ENCODE measurements at regions of chr6 and their contacts with region 1.

Region 1: DNA sequence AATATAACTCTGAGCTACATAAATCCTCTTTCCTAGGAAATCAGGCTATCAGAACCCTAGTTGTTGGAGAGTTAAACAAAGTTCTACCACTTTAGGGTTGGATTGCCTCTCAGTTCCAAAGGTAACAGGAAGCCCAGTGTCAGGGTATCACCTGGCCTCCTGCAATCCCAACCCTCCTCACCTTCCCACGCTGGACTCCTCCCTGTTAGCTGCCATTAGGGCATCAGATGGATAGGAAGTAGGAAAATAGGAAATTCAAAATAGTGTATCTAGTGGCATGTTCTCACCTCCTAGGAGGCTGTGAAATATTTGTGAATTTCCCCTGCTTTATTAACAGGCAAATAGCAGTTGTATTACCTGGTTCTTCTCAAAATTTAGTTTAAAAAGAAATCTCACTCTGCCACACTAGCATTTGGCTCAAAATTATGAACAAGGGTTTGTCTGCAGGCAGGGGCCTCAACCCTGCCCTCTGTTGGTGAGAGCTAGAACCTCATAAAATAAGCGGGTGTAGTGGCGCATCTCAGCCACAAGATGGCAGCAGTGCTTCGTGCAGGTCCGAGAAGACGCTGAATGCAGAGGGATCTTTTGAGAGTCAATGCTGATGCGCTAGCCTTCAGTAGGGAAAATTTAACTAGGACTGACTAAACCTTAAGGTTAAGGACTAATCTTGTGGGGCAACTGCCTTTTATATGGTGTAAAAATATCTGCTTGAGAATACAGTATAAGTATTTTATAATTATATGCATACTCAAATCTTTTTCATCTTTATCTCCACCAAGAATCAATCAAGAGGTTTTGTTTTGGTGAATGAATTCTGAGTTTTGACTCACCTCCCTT is 209.8 kb upstream of the KCNQ5 start:
- DNase-seq: peak; percentile 42 to 82
- H3K4me3 ChIP-seq: no peak overlapping the region
- H3K27ac ChIP-seq: no peak overlapping the region
- H3K4me1 ChIP-seq: no peaks in the 10 kb centered on the region
- H3K27me3 ChIP-seq: no peaks in the 10 kb centered on the region
- CTCF ChIP-seq: peak; percentile 100

Region 2: DNA sequence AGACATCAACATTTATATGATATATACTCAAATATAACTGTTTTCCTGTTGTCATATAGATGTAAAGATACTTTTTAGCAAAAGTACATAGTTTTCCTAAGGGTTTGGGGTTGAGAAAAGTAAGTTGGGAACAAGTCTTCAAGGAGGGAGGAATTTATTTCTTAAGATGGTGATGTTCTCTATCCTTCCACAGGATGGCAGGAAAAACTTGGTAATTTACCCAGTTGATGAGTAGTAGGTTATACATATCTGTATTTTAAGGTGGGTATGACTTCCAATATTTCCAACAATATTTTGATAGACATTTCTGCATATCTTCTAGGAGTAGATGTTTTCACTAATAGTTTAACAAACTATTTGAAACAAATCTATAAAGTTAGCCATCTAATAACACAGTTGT is 271.3 kb before region 1 on chr6:
- CTCF ChIA-PET with region 1: no interaction called
- POLR2A ChIA-PET with region 1: no interaction called
- intact Hi-C with region 1: loop called (anchors 1 kb)
- DNase-seq: no peak
- H3K4me3 ChIP-seq: no peak overlapping the region
- H3K27ac ChIP-seq: no peak overlapping the region
- H3K4me1 ChIP-seq: no peaks in the 10 kb centered on the region
- H3K27me3 ChIP-seq: no peaks in the 10 kb centered on the region
- CTCF ChIP-seq: no peak

Region 3: DNA sequence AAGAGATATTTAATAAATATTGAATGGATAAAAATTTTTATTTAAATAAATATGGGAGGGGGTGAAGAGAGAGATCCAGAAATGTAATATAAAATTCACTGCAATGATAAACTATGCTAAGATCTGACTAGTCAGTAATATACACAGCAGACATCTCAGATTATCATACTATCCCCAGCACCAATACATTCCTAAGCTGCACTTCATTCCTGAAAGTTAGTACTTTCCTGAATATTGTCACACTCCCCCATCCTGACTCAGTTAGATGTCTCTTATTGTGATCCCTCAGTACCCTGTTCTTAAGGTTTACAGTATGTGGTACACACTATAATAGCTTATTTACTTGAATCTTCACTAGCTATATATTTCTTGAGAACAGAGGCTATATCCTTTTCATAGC is 121.5 kb after region 1 on chr6:
- CTCF ChIA-PET with region 1: interaction called, 10 read pairs
- POLR2A ChIA-PET with region 1: no interaction called
- intact Hi-C with region 1: no loop called
- DNase-seq: no peak
- H3K4me3 ChIP-seq: no peak overlapping the region
- H3K27ac ChIP-seq: no peak overlapping the region
- H3K4me1 ChIP-seq: no peaks in the 10 kb centered on the region
- H3K27me3 ChIP-seq: no peaks in the 10 kb centered on the region
- CTCF ChIP-seq: no peak

Region 4: GRCh38 chr6:73129653-73130443 is 717.8 kb after region 1 on chr6:
- CTCF ChIA-PET with region 1: interaction called, 7 read pairs
- POLR2A ChIA-PET with region 1: no interaction called
- intact Hi-C with region 1: loop called (anchors 1 kb)
- DNase-seq: peak; percentile 77 to 87
- H3K4me3 ChIP-seq: no peak overlapping the region
- H3K27ac ChIP-seq: no peak overlapping the region
- H3K4me1 ChIP-seq: no peaks in the 10 kb centered on the region; the same call in 1 of the 2 replicates
- H3K27me3 ChIP-seq: no peaks in the 10 kb centered on the region
- CTCF ChIP-seq: peak; percentile 97

Region 5: GRCh38 chr6:73329201-73329600 is 917.1 kb after region 1 on chr6:
- CTCF ChIA-PET with region 1: interaction called, 7 read pairs
- POLR2A ChIA-PET with region 1: no interaction called
- intact Hi-C with region 1: loop called (anchors 2 kb)
- DNase-seq: no peak
- H3K4me3 ChIP-seq: no peak overlapping the region
- H3K27ac ChIP-seq: no peak overlapping the region
- H3K4me1 ChIP-seq: no peaks in the 10 kb centered on the region
- H3K27me3 ChIP-seq: no peaks in the 10 kb centered on the region
- CTCF ChIP-seq: no peak